Panc1 (cell line): ENCODE measurements at regions of chr3 and their contacts with region 1.

Region 1: GRCh38 chr3:36868614-36869436 is 76.0 kb downstream of the TRANK1 start:
- DNase-seq: peak; percentile 48
- ATAC-seq: peak; percentile 89
- H3K4me3 ChIP-seq: no peak overlapping the region
- H3K27ac ChIP-seq: no peak overlapping the region
- H3K4me1 ChIP-seq: no peaks in the 10 kb centered on the region
- H3K27me3 ChIP-seq: no peaks in the 10 kb centered on the region
- CTCF ChIP-seq: peak; percentile 78

Region 2: DNA sequence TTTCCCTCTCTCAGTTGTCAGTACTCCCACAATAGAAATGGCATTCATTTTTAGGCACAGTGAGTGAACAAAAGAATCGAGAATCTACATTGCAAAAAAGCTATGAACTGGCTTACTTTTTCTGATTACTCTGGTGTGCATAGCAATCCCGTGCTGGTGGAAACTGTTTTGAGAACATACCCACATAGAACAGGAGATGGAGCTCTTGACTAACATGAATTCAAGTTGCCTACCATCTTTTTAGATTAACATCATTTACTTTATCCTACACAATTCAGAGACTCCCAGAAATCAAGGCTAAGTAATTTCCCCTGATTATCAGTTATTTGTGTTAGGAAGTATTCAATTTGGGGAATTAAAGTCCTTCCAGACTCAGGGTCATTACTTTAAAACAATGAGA is 902.9 kb before region 1 on chr3:
- CTCF ChIA-PET with region 1: no interaction called
- POLR2A ChIA-PET with region 1: no interaction called
- in situ Hi-C with region 1: no loop called
- intact Hi-C with region 1: loop called (anchors 10 kb)
- DNase-seq: no peak
- ATAC-seq: no peak; the same call in 1 of the 2 replicates
- H3K4me3 ChIP-seq: no peak overlapping the region
- H3K27ac ChIP-seq: no peak overlapping the region
- H3K4me1 ChIP-seq: no peaks in the 10 kb centered on the region
- H3K27me3 ChIP-seq: no peaks in the 10 kb centered on the region
- CTCF ChIP-seq: peak; percentile 49; the same call in 1 of the 2 replicates

Region 3: DNA sequence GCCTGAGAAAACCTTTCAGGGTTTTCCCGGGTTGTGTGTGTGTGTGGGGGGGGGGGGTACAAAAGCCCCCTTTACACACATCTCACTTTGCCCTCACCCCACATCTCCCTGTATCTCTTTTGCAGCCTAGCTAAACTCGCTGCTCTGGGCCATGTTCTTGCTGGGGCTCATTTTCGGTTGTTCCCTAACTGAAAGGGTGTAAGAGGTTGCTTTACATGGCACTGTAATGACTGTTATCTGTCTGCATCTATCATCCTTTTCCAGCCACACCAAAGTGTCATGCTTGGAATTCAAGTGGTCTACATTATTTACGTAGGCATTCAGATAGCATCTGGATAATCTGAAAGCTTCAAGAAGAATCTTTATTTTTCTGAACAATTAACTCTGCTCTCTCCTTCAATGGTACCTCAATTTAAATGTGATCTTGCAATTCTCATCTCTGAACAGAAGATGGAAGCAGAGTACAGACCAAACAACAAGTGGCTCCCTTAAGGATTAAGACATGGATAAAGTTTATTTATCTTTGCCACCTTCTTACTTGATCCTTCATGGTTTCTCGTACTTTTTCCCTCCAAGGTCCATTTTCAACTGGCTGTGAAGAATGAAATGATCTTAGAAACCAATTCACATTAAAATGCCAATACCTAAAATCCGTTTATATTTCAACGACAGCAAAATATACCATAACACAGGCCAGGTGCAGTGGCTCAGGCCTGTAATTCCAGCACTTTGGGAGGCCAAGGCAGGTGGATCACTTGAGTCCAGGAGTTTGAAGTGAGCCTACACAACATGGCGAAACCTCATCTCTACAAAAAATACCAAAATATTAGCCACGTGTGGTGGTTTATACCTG is 139.4 kb before region 1 on chr3:
- CTCF ChIA-PET with region 1: no interaction called
- POLR2A ChIA-PET with region 1: no interaction called
- in situ Hi-C with region 1: no loop called
- intact Hi-C with region 1: loop called (anchors 1 kb)
- DNase-seq: peak; percentile 27
- ATAC-seq: peak; percentile 76; the same call in 1 of the 2 replicates
- H3K4me3 ChIP-seq: no peak overlapping the region
- H3K27ac ChIP-seq: no peak overlapping the region
- H3K4me1 ChIP-seq: no peaks in the 10 kb centered on the region
- H3K27me3 ChIP-seq: no peaks in the 10 kb centered on the region
- CTCF ChIP-seq: peak; percentile 69

Region 4: GRCh38 chr3:36792342-36792741 is 76.5 kb before region 1 on chr3:
- CTCF ChIA-PET with region 1: no interaction called
- POLR2A ChIA-PET with region 1: no interaction called
- in situ Hi-C with region 1: no loop called
- intact Hi-C with region 1: loop called (anchors 5 kb)
- DNase-seq: peak; percentile 5
- ATAC-seq: peak; percentile 84
- H3K4me3 ChIP-seq: no peak overlapping the region
- H3K27ac ChIP-seq: no peak overlapping the region
- H3K4me1 ChIP-seq: no peaks in the 10 kb centered on the region
- H3K27me3 ChIP-seq: no peaks in the 10 kb centered on the region
- CTCF ChIP-seq: peak; percentile 50

Region 5: DNA sequence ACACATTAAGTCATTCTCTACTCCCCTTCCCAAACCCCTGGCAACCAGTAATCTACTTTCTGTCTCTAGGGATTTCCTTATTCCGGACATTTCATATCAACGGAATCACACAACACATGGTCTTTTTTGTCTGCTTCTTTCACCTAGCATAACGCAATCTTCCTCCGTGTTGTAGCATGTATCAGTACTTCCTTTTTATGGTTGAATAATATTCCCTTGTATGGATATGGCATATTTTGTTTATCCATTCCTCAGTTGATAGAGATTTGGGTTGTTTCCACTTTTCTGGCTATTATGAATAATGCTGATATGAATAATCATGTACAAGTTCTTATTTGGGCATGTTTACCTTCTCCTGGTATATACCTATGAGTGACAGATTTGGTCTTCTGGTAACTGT is 12.9 kb after region 1 on chr3:
- CTCF ChIA-PET with region 1: no interaction called
- POLR2A ChIA-PET with region 1: no interaction called
- in situ Hi-C with region 1: no loop called
- intact Hi-C with region 1: no loop called
- DNase-seq: no peak
- ATAC-seq: no peak
- H3K4me3 ChIP-seq: no peak overlapping the region
- H3K27ac ChIP-seq: no peak overlapping the region
- H3K4me1 ChIP-seq: no peaks in the 10 kb centered on the region
- H3K27me3 ChIP-seq: no peaks in the 10 kb centered on the region
- CTCF ChIP-seq: no peak

Region 6: GRCh38 chr3:36957862-36958686 is 89.2 kb after region 1 on chr3:
- CTCF ChIA-PET with region 1: no interaction called
- POLR2A ChIA-PET with region 1: no interaction called
- in situ Hi-C with region 1: no loop called
- intact Hi-C with region 1: loop called (anchors 1 kb)
- DNase-seq: no peak
- ATAC-seq: no peak; the same call in 1 of the 2 replicates
- H3K4me3 ChIP-seq: no peak overlapping the region
- H3K27ac ChIP-seq: no peak overlapping the region
- H3K4me1 ChIP-seq: no peaks in the 10 kb centered on the region
- H3K27me3 ChIP-seq: no peaks in the 10 kb centered on the region
- CTCF ChIP-seq: no peak

Region 7: DNA sequence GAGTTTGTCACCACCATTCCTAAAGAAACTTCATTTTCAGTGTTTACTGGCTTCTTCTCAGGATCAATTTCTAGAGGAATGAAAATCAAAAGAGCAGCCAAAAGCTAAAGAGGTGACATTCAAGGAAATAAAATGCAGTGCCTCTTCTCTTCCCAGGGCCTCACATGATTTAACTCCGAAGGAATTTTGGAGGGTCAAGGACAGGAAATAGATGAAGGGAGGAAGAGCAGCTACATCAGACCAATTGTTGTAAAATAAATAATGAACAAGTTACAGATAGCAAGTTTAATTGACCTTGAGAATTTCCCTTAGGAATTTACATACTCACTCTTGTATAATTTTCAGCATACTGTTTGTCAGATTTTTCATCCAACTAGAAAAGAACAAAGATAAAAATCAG is 227.5 kb after region 1 on chr3:
- CTCF ChIA-PET with region 1: no interaction called
- POLR2A ChIA-PET with region 1: no interaction called
- in situ Hi-C with region 1: no loop called
- intact Hi-C with region 1: no loop called
- DNase-seq: no peak
- ATAC-seq: no peak
- H3K4me3 ChIP-seq: no peak overlapping the region
- H3K27ac ChIP-seq: no peak overlapping the region
- H3K4me1 ChIP-seq: no peaks in the 10 kb centered on the region
- H3K27me3 ChIP-seq: no peaks in the 10 kb centered on the region
- CTCF ChIP-seq: no peak